Activated B cell treated with CpG ODN at 0.5 μM for 24 hours (primary cell): ENCODE measurements at regions of chr6 and their contacts with region 1.

Region 1: GRCh38 chr6:135054569-135055498 is at the start of gene HBS1L:
- DNase-seq: peak; percentile 94
- ATAC-seq: peak; percentile 98
- H3K4me3 Mint-ChIP-seq: peak within 1 kb of the TSS; percentile 98
- H3K27ac Mint-ChIP-seq: peak within 1 kb of the TSS; percentile 97
- H3K4me1 Mint-ChIP-seq: peaks cover 35% of the 10 kb centered on the region
- H3K27me3 Mint-ChIP-seq: no peaks in the 10 kb centered on the region
- CTCF ChIP-seq: no peak
- total RNA-seq, gene HBS1L: 60.2 and 67.5 TPM in 2 replicates

Region 2: GRCh38 chr6:133952815-133953633 is 1101.8 kb before region 1 on chr6 and contains the start of gene TBPL1:
- CTCF ChIA-PET with region 1: no interaction called
- POLR2A ChIA-PET with region 1: interaction called, 7 read pairs
- intact Hi-C with region 1: loop called (anchors 2 kb)
- DNase-seq: peak; percentile 83
- ATAC-seq: peak; percentile 84
- H3K4me3 Mint-ChIP-seq: peak within 1 kb of the TSS; percentile 95
- H3K27ac Mint-ChIP-seq: peak within 1 kb of the TSS; percentile 98
- H3K4me1 Mint-ChIP-seq: peaks cover 53% of the 10 kb centered on the region
- H3K27me3 Mint-ChIP-seq: no peaks in the 10 kb centered on the region
- CTCF ChIP-seq: no peak
- total RNA-seq, gene TBPL1: 33.0 and 35.7 TPM in 2 replicates

Region 3: GRCh38 chr6:134849920-134850447 is 204.8 kb before region 1 on chr6:
- CTCF ChIA-PET with region 1: no interaction called
- POLR2A ChIA-PET with region 1: no interaction called
- intact Hi-C with region 1: no loop called
- DNase-seq: no peak
- ATAC-seq: no peak
- H3K4me3 Mint-ChIP-seq: no peak overlapping the region
- H3K27ac Mint-ChIP-seq: no peak overlapping the region
- H3K4me1 Mint-ChIP-seq: no peaks in the 10 kb centered on the region
- H3K27me3 Mint-ChIP-seq: peaks cover 10% of the 10 kb centered on the region
- CTCF ChIP-seq: no peak

Region 4: GRCh38 chr6:135044639-135045038 is 10.2 kb before region 1 on chr6:
- CTCF ChIA-PET with region 1: interaction called, 4 read pairs
- POLR2A ChIA-PET with region 1: interaction called, 8 read pairs
- intact Hi-C with region 1: loop called (anchors 1 kb)
- DNase-seq: no peak
- ATAC-seq: peak; percentile 21
- H3K4me3 Mint-ChIP-seq: peak overlapping the region; percentile 26
- H3K27ac Mint-ChIP-seq: peak overlapping the region; percentile 43
- H3K4me1 Mint-ChIP-seq: peaks cover 41% of the 10 kb centered on the region
- H3K27me3 Mint-ChIP-seq: no peaks in the 10 kb centered on the region
- CTCF ChIP-seq: no peak

Region 5: DNA sequence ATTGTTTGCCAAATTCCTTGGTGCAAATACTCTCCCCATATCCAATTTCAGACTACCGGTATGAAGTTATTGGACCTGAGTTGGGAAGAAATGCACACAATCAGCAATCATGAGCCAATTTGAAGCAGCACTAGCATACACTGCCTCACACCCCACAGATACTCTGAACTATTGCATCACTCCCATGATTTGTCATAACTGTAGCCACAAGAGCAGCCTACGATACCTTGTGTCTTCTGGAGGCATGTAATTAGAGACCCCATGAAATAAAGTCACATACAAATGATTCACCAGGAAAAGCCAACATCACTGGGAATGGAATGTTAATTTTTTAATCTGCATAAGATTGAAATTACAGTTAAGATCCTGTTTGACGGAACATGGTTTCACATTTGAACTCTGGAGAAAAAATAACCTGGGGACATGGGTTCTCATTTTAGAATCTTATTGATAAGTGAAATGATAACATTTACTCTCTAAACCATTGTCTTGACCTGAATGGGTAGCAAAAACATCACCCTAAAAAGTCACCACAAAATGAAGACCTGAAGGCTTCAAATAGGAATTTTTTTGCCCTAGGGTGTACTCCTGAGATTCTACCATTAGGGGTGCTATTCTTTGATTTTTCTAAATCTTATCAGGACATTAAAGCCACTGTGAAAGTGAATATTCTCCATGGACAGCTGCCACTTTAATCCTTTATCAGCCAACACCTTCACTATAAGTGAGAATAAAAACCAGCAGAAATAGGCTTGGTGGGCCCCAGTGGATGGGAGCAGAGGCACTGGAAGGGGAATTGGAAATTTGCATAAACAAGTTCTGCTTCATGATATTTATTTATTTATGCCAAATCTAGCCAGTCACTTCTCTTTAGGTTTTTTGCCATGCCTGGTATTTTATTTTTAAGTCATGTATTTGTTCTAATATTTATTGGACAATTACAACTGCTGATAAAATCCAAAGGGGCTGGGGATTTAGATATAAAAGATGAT is 34.3 kb after region 1 on chr6:
- CTCF ChIA-PET with region 1: no interaction called
- POLR2A ChIA-PET with region 1: interaction called, 8 read pairs
- intact Hi-C with region 1: loop called (anchors 2 kb)
- DNase-seq: no peak
- ATAC-seq: peak; percentile 86
- H3K4me3 Mint-ChIP-seq: peak overlapping the region; percentile 64
- H3K27ac Mint-ChIP-seq: no peak overlapping the region
- H3K4me1 Mint-ChIP-seq: peaks cover 34% of the 10 kb centered on the region
- H3K27me3 Mint-ChIP-seq: peaks cover 2% of the 10 kb centered on the region
- CTCF ChIP-seq: no peak

Region 6: GRCh38 chr6:135145063-135145800 is 90.4 kb after region 1 on chr6:
- CTCF ChIA-PET with region 1: no interaction called
- POLR2A ChIA-PET with region 1: no interaction called
- intact Hi-C with region 1: loop called (anchors 1 kb)
- DNase-seq: no peak
- ATAC-seq: peak; percentile 62
- H3K4me3 Mint-ChIP-seq: peak overlapping the region; percentile 56
- H3K27ac Mint-ChIP-seq: peak overlapping the region; percentile 62
- H3K4me1 Mint-ChIP-seq: peaks cover 46% of the 10 kb centered on the region
- H3K27me3 Mint-ChIP-seq: no peaks in the 10 kb centered on the region
- CTCF ChIP-seq: no peak

Region 7: DNA sequence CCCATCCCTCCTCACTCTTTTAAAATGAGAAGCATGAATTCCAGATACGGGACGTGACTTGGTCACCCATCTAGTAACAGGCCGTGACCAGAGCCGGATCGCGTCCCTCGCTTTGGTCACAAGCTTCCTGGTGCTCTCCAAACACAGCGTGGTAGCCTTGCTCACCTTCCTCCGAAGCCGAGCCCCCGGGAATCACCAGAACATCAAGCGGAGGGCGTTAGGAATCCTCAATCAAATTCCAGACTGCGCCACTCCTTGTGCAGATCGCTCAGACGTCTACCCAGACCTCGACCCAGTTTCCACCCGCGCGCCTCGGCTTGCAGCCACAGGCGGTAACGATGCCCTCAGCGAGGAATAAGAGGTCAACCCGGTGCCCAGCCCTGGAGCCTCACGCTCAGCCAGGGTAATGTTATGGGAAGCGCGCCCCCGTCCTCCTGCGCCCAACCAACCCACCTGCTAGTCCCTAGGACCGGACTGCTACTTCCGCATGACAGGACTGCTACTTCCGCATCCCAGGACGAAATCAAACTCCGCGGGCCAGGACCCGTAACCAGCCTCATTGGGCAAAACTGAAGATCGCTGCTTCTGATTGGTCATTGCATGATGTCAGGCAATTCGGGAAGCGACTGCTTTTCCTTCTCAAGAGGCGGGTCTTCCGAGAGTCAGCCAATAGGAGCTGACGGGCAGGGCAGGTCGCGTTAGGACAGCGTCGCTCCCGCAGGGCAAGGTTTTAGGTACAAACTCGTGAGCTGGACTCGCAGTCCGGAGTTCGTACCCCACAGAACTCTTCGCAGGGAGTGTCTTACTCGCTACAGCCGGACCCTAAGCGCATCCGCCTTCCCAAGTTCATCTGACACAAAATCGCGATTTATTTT is 1195.2 kb after region 1 on chr6 and contains the start of gene MTFR2:
- CTCF ChIA-PET with region 1: no interaction called
- POLR2A ChIA-PET with region 1: no interaction called
- intact Hi-C with region 1: loop called (anchors 2 kb)
- DNase-seq: peak; percentile 74
- ATAC-seq: peak; percentile 97
- H3K4me3 Mint-ChIP-seq: peak within 1 kb of the TSS; percentile 89
- H3K27ac Mint-ChIP-seq: peak within 1 kb of the TSS; percentile 57
- H3K4me1 Mint-ChIP-seq: peaks cover 27% of the 10 kb centered on the region
- H3K27me3 Mint-ChIP-seq: no peaks in the 10 kb centered on the region
- CTCF ChIP-seq: no peak
- total RNA-seq, gene MTFR2: 2.5 and 3.5 TPM in 2 replicates